Activated B cell treated with CpG ODN at 0.5 μM for 24 hours (primary cell): ENCODE measurements at regions of chr2 and their contacts with region 1.

Region 1: GRCh38 chr2:127701193-127701650 is at the start of gene SFT2D3:
- DNase-seq: peak; percentile 85
- ATAC-seq: peak; percentile 74
- H3K4me3 Mint-ChIP-seq: peak within 1 kb of the TSS; percentile 93
- H3K27ac Mint-ChIP-seq: peak within 1 kb of the TSS; percentile 99
- H3K4me1 Mint-ChIP-seq: peaks cover 40% of the 10 kb centered on the region
- H3K27me3 Mint-ChIP-seq: no peaks in the 10 kb centered on the region
- CTCF ChIP-seq: no peak
- total RNA-seq, gene SFT2D3: 9.6 and 10.1 TPM in 2 replicates

Region 2: GRCh38 chr2:127526149-127527000 is 174.8 kb before region 1 on chr2 and contains the start of gene IWS1:
- CTCF ChIA-PET with region 1: no interaction called
- POLR2A ChIA-PET with region 1: interaction called, 26 read pairs
- intact Hi-C with region 1: loop called (anchors 1 kb)
- DNase-seq: peak; percentile 85
- ATAC-seq: peak; percentile 86
- H3K4me3 Mint-ChIP-seq: peak within 1 kb of the TSS; percentile 95
- H3K27ac Mint-ChIP-seq: peak within 1 kb of the TSS; percentile 98
- H3K4me1 Mint-ChIP-seq: peaks cover 32% of the 10 kb centered on the region
- H3K27me3 Mint-ChIP-seq: no peaks in the 10 kb centered on the region
- CTCF ChIP-seq: no peak
- total RNA-seq, gene IWS1: 45.6 and 49.3 TPM in 2 replicates

Region 3: GRCh38 chr2:127619877-127620705 is 81.1 kb before region 1 on chr2:
- CTCF ChIA-PET with region 1: no interaction called
- POLR2A ChIA-PET with region 1: interaction called, 15 read pairs
- intact Hi-C with region 1: no loop called
- DNase-seq: peak; percentile 21
- ATAC-seq: peak; percentile 56
- H3K4me3 Mint-ChIP-seq: peak overlapping the region; percentile 70
- H3K27ac Mint-ChIP-seq: peak overlapping the region; percentile 76
- H3K4me1 Mint-ChIP-seq: peaks cover 82% of the 10 kb centered on the region
- H3K27me3 Mint-ChIP-seq: no peaks in the 10 kb centered on the region
- CTCF ChIP-seq: no peak

Region 4: GRCh38 chr2:127726158-127726880 is 25.1 kb after region 1 on chr2:
- CTCF ChIA-PET with region 1: no interaction called
- POLR2A ChIA-PET with region 1: no interaction called
- intact Hi-C with region 1: no loop called
- DNase-seq: no peak
- ATAC-seq: no peak
- H3K4me3 Mint-ChIP-seq: no peak overlapping the region
- H3K27ac Mint-ChIP-seq: no peak overlapping the region
- H3K4me1 Mint-ChIP-seq: no peaks in the 10 kb centered on the region
- H3K27me3 Mint-ChIP-seq: no peaks in the 10 kb centered on the region
- CTCF ChIP-seq: no peak

Region 5: DNA sequence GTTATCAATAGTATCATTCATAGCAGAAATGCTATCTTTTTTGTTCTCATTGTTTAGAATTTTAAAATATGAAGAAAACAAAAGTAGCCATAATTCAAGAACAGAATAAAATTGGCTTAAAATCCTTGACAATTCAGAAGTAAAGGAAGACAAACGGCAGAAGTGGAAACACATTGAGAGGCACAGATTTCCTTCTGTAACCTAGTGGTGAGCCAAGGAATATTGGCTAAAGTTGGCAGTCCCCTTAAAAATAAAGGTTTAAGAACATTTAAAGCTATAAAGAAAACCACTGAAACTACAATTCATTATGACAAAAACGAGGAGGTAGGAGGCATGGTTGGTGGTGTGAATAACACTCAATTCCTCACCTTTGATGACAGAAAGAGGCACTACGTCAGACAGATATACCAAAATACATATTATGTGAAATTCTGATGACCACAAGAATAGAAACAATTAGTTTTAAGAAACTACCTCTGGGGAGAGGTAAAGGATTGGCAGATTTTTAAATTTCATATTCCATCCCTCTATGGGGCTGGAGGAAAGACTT is 42.3 kb after region 1 on chr2:
- CTCF ChIA-PET with region 1: no interaction called
- POLR2A ChIA-PET with region 1: interaction called, 12 read pairs
- intact Hi-C with region 1: no loop called
- DNase-seq: no peak
- ATAC-seq: no peak
- H3K4me3 Mint-ChIP-seq: no peak overlapping the region
- H3K27ac Mint-ChIP-seq: no peak overlapping the region
- H3K4me1 Mint-ChIP-seq: peaks cover 8% of the 10 kb centered on the region
- H3K27me3 Mint-ChIP-seq: no peaks in the 10 kb centered on the region
- CTCF ChIP-seq: no peak

Region 6: GRCh38 chr2:127829845-127830246 is 128.6 kb after region 1 on chr2:
- CTCF ChIA-PET with region 1: interaction called, 4 read pairs
- POLR2A ChIA-PET with region 1: interaction called, 17 read pairs
- intact Hi-C with region 1: loop called (anchors 1 kb)
- DNase-seq: peak; percentile 57
- ATAC-seq: peak; percentile 94
- H3K4me3 Mint-ChIP-seq: peak overlapping the region; percentile 66
- H3K27ac Mint-ChIP-seq: peak overlapping the region; percentile 84
- H3K4me1 Mint-ChIP-seq: peaks cover 43% of the 10 kb centered on the region
- H3K27me3 Mint-ChIP-seq: peaks cover 12% of the 10 kb centered on the region
- CTCF ChIP-seq: no peak

Region 7: DNA sequence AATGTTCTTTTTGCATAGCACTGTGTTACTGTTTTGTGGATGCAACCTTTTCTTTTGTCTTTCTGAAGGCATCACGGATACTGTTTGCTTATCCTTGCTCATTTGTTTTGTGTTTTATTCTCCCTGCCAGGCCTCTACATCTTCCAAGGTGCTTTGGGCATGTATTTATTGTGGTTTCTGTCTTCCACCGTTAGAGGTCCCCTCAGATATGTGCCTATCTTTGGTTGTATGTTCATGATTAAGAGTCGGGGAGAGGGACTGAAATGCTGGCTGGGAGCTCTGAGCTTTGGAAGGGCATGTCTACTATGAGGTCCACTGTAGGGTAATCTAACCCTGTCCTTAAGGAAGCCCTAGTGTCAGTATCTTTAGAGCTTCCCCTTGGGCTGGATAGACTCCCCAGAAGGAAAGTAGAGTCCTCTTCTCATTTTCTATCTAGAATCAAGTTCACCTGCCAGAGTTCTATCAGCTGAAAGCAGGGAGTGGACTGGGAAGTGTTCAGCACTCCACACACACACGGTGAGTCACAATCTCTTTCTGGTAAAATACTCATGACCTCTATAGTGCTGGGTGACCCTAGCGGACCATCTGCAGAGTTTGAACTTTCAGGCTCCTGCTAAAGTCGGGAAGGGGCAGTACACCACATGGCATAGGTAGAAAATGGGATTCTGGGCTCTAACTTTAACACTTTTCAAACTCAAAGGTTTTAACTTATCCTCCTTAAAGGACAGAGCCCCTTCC is 283.2 kb after region 1 on chr2:
- CTCF ChIA-PET with region 1: no interaction called
- POLR2A ChIA-PET with region 1: no interaction called
- intact Hi-C with region 1: no loop called
- DNase-seq: no peak
- ATAC-seq: no peak
- H3K4me3 Mint-ChIP-seq: no peak overlapping the region
- H3K27ac Mint-ChIP-seq: no peak overlapping the region
- H3K4me1 Mint-ChIP-seq: no peaks in the 10 kb centered on the region
- H3K27me3 Mint-ChIP-seq: no peaks in the 10 kb centered on the region
- CTCF ChIP-seq: no peak

Region 8: DNA sequence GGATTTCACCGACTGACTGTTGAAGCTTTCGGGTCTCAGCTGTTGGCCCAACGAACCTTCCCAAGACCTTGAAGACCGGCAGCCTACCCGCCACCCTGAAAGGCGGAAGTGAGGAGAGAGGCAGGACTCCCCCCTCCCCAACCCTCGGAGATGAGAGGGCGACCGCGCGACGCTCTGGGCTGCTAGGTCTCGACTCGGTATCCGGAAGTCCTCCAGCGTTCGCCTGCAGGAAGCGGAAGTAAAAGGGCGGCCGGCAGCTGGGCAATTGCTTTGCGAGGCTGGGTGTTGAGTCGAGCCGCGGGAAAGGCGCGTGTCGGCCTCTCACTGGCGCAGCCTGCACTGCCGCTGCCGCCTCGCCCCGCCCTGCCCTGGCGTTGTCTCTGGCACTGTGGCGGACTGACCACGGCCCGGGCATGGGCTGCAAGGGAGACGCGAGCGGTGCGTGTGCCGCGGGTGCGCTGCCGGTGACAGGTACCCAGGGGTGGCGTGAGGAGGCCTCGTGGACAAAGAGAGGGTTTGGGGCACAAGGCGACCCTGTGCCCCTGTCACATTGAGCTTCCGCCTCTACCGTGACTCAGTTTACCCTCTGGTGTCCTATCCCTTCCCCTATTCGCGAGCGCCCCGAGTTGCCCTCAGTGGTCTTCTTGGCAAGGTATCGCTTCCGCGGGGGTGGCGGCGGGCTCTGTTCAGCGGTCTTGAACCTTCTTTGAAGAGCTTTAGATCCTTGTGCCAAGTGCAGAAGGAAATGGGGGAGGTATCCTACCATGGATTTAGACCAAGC is 389.9 kb after region 1 on chr2 and contains the start of gene UGGT1:
- CTCF ChIA-PET with region 1: no interaction called
- POLR2A ChIA-PET with region 1: interaction called, 13 read pairs
- intact Hi-C with region 1: no loop called
- DNase-seq: peak; percentile 83
- ATAC-seq: peak; percentile 96
- H3K4me3 Mint-ChIP-seq: peak within 1 kb of the TSS; percentile 88
- H3K27ac Mint-ChIP-seq: peak within 1 kb of the TSS; percentile 93
- H3K4me1 Mint-ChIP-seq: peaks cover 41% of the 10 kb centered on the region
- H3K27me3 Mint-ChIP-seq: no peaks in the 10 kb centered on the region
- CTCF ChIP-seq: no peak
- total RNA-seq, gene UGGT1: 43.7 and 46.8 TPM in 2 replicates